ENCODE measurements at regions of chr16 and their contacts with region 1.

Region 1: DNA sequence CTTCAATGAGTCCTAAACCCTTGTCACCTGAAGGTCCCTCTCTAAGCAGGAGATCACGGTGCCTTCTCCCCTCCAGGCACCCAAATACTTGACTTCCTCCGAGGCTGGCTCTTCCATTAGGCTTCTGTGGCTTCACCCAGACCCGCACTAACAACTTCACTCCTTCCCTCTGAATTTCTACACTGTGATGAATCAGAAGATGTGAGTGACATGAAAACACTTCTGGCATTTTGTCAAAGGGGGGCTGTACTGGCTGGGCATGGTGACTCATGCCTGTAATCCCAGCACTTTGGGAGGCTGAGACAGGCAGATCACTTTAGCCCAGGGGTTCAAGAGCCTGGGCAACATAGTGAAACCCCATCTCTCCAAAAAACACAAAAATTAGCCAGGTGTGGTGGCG is 72.6 kb upstream of the CNEP1R1 start:
- DNase-seq: no peak
- H3K4me3 ChIP-seq: no peak overlapping the region
- H3K27ac ChIP-seq: no peak overlapping the region
- H3K4me1 ChIP-seq: no peaks in the 10 kb centered on the region
- H3K27me3 ChIP-seq: no peaks in the 10 kb centered on the region
- CTCF ChIP-seq: no peak
- EP300 ChIP-seq: no peak
- POLR2A ChIP-seq: no peak

Region 2: GRCh38 chr16:49739381-49739780 is 213.0 kb before region 1 on chr16:
- in situ Hi-C with region 1: no loop called
- intact Hi-C with region 1: no loop called
- DNase-seq: no peak
- H3K4me3 ChIP-seq: no peak overlapping the region
- H3K27ac ChIP-seq: no peak overlapping the region
- H3K4me1 ChIP-seq: no peaks in the 10 kb centered on the region
- H3K27me3 ChIP-seq: no peaks in the 10 kb centered on the region
- CTCF ChIP-seq: no peak
- EP300 ChIP-seq: no peak
- POLR2A ChIP-seq: no peak

Region 3: DNA sequence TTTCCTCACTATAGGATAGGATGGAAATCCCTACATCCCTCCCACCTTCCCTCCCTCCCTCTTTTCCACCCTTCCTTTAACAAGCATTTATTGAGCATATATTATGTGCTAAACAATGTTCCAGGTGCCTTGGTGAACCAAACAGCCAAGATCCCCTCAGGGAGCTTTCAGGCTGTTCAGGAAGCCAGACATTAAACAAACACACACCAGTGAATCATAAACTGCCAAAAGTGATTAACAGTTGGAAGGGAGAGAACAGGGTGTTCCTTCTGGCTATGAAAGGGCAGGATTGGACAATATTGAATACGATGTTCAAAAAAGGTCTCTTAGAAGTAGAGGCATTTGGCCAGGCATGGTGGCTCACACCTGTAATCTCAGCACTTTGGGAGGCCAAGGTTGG is 49.8 kb after region 1 on chr16:
- in situ Hi-C with region 1: no loop called
- intact Hi-C with region 1: no loop called
- DNase-seq: no peak
- H3K4me3 ChIP-seq: no peak overlapping the region
- H3K27ac ChIP-seq: no peak overlapping the region
- H3K4me1 ChIP-seq: no peaks in the 10 kb centered on the region
- H3K27me3 ChIP-seq: no peaks in the 10 kb centered on the region
- CTCF ChIP-seq: no peak
- EP300 ChIP-seq: no peak
- POLR2A ChIP-seq: no peak

Region 4: DNA sequence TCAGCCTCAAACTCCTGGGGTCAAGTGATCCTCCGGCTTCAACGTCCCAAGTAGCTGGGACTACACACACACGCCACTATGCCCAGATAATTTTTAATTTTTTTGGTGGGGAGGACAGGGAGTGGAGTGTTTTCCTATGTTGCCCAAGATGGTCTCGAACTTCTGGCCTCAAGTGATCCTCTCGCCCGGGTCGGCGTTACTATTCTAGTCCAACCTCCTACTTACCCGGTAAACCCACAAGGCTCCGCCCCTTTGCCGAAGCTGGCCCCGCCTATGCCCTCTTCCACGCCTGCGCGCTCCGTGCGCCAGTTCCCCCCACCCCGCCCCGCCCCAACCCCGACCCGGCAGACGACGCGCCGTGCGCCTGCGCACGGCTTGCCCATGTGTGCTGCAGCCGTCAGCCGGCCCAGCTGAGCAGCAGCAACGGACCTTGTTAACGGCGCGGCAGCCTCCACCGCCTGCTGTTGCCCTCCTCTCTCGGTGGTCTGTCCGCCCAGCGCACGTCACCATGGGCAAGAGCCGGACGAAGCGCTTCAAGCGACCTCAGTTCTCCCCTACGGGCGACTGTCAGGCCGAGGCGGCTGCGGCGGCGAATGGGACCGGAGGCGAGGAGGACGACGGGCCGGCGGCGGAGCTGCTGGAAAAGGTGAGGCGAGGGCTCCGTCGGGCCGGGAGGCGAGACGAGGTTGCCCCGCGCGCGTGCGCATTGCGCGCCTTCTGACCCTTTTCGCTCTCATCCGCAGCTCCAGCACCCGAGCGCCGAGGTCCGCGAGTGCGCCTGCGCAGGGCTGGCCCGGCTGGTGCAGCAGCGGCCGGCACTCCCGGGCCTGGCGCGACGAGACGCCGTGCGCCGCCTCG is 113.5 kb after region 1 on chr16 and contains the start of gene HEATR3:
- in situ Hi-C with region 1: loop called in 1 of 4 experiments (anchors 25 kb)
- intact Hi-C with region 1: no loop called
- DNase-seq: peak; percentile 96
- H3K4me3 ChIP-seq: peak within 1 kb of the TSS; percentile 53 to 99 (median 93)
- H3K27ac ChIP-seq: peak within 1 kb of the TSS; percentile 92 to 100 (median 98)
- H3K4me1 ChIP-seq: peaks cover 13 to 21% (median 16%) of the 10 kb centered on the region in 4 donors
- H3K27me3 ChIP-seq: no peaks in the 10 kb centered on the region
- CTCF ChIP-seq: peak in 1 of 5 experiments; percentile 30
- EP300 ChIP-seq: no peak
- POLR2A ChIP-seq: peak; percentile 51
- total RNA-seq, gene HEATR3: 17.6 to 42.2 (median 25.8) TPM